Activated CD8-positive, alpha-beta T cell treated with anti-CD3 and anti-CD28 coated beads for 36 hours (primary cell): ENCODE measurements at regions of chr17 and their contacts with region 1.

Region 1: DNA sequence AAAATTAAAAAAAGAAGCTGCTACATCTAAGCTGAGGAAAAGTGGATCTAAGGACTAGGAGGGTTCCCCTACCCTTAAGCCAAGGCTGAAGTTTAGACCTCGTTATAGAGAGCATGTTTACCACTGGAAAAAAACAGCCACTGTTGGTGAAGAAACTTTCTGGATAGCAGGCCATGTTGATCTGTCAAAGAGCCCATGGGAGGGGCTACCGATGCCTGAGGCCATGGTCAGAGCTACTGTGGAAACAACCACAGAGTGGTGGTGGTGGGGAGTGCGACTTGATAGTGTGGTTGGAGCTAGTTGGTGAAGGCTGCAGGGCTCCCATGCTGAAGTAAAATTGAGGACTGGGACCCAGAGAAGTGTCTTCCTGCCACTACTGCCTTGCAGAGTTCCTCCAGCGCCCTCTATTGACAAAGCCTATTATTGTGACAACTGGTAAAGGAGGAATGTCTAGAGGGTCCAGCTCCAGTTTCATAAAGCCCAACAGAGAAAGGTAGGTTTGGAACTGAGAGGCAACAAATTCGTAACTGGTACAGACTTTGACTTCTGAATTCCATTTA is 12.7 kb upstream of the FAM20A start:
- DNase-seq: peak; percentile 48
- ATAC-seq: peak; percentile 64
- H3K4me3 Mint-ChIP-seq: no peak overlapping the region
- H3K27ac Mint-ChIP-seq: no peak overlapping the region
- H3K4me1 Mint-ChIP-seq: no peaks in the 10 kb centered on the region
- H3K27me3 Mint-ChIP-seq: peaks cover 14% of the 10 kb centered on the region
- CTCF ChIP-seq: peak; percentile 71

Region 2: GRCh38 chr17:68533887-68534694 is 79.7 kb before region 1 on chr17:
- CTCF ChIA-PET with region 1: interaction called, 20 read pairs
- POLR2A ChIA-PET with region 1: no interaction called
- intact Hi-C with region 1: no loop called
- DNase-seq: no peak
- ATAC-seq: no peak
- H3K4me3 Mint-ChIP-seq: no peak overlapping the region
- H3K27ac Mint-ChIP-seq: no peak overlapping the region
- H3K4me1 Mint-ChIP-seq: peaks cover 4% of the 10 kb centered on the region
- H3K27me3 Mint-ChIP-seq: no peaks in the 10 kb centered on the region
- CTCF ChIP-seq: peak; percentile 51

Region 3: GRCh38 chr17:68657166-68657565 is 43.3 kb after region 1 on chr17:
- CTCF ChIA-PET with region 1: no interaction called
- POLR2A ChIA-PET with region 1: no interaction called
- intact Hi-C with region 1: no loop called
- DNase-seq: no peak
- ATAC-seq: no peak
- H3K4me3 Mint-ChIP-seq: no peak overlapping the region
- H3K27ac Mint-ChIP-seq: no peak overlapping the region
- H3K4me1 Mint-ChIP-seq: no peaks in the 10 kb centered on the region
- H3K27me3 Mint-ChIP-seq: peaks cover 5% of the 10 kb centered on the region
- CTCF ChIP-seq: no peak